Activated CD4-positive, alpha-beta T cell treated with anti-CD3 and anti-CD28 coated beads, Interleukin-2, amount 10 ng/mL, durations not matched to agents 24 days and 14 days (primary cell): ENCODE measurements at regions of chr14 and their contacts with region 1.

Region 1: GRCh38 chr14:72594099-72594901 is 299.6 kb downstream of the DPF3 start:
- DNase-seq: peak; percentile 90
- H3K4me3 Mint-ChIP-seq: peak overlapping the region; percentile 74
- H3K27ac Mint-ChIP-seq: peak overlapping the region; percentile 51
- H3K4me1 Mint-ChIP-seq: peaks cover 47% of the 10 kb centered on the region
- H3K27me3 Mint-ChIP-seq: peaks cover 24% of the 10 kb centered on the region

Region 2: DNA sequence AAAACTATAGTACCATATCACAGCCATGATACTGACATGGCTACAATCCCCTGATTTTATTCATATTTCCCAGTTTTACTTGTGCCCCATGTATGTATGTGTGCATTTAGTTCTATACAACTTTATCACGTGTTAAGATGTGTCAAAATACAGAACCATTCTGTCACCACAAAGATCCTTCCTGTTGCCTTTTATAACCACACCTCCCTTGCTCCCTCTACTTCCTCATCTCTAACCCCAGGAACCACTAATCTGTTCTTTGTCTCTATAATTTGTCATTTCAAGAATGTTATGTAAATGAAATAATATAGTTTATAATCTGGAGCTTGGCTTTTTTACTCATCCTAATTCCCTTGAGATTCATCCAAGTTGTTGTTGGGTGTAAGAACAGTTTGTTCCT is 58.8 kb before region 1 on chr14:
- intact Hi-C with region 1: loop called (anchors 2 kb)
- DNase-seq: peak; percentile 68
- H3K4me3 Mint-ChIP-seq: peak overlapping the region; percentile 34
- H3K27ac Mint-ChIP-seq: peak overlapping the region; percentile 27
- H3K4me1 Mint-ChIP-seq: peaks cover 58% of the 10 kb centered on the region
- H3K27me3 Mint-ChIP-seq: peaks cover 16% of the 10 kb centered on the region